Lower leg skin (tissue), 4 donors: ENCODE measurements at regions of chr4 and their contacts with region 1.

Region 1: GRCh38 chr4:98995183-98996055 is at the start of gene METAP1:
- DNase-seq: peak; percentile 92 to 98
- H3K4me3 ChIP-seq: peak within 1 kb of the TSS; percentile 98
- CTCF ChIP-seq: peak in 1 of 3 donors; percentile 19
- POLR2A ChIP-seq: peak in 1 of 2 donors; percentile 5
- total RNA-seq, gene METAP1: 35.0 to 58.4 (median 39.8) TPM

Region 2: DNA sequence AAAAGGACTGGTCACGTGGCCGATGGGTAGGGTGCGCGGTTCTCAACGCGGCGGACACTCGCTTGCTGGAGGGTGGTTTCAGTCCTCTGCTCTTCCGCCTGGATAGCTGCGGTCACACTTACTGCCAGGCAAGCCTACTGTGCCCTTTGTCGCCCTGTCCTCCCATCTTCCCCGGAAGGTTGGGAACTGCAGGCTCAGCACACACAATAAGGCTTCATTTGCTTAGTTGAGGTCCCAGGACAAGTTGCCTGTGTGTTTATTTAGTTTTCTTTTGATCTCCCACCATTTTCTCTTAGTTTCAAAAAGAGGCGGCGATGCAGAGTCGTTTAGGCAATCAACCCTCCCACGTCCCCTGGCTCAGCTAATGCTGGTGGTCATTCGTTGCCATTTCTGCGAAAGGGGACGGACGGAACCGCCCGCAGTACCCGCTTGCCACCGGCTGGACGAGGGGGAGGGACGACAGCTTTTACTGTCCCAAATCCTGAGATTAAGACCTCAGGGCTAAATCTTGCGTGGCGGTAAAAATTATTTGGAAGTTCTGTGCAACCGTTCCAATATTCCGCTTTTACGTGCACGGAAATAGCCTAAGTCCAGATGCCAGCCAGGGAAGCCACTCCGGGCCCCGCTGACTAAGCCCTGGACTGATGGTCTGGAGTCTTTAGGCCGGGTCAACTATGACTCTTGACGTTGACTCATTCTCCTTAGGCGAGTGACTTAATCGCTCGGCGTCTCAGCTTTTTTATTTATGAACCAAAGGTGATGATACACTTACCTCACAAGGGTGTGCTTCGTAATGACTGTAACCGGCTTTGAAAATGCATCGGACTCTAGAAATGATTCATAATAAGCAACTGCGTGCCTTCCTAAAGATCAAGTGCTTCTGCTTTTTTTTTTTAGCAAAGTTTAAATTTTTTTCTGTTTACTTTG is 65.8 kb before region 1 on chr4:
- intact Hi-C with region 1: loop called (anchors 10 kb)
- DNase-seq: peak; percentile 72 to 94
- H3K4me3 ChIP-seq: peak overlapping the region; percentile 58
- CTCF ChIP-seq: no peak
- POLR2A ChIP-seq: no peak

Region 3: DNA sequence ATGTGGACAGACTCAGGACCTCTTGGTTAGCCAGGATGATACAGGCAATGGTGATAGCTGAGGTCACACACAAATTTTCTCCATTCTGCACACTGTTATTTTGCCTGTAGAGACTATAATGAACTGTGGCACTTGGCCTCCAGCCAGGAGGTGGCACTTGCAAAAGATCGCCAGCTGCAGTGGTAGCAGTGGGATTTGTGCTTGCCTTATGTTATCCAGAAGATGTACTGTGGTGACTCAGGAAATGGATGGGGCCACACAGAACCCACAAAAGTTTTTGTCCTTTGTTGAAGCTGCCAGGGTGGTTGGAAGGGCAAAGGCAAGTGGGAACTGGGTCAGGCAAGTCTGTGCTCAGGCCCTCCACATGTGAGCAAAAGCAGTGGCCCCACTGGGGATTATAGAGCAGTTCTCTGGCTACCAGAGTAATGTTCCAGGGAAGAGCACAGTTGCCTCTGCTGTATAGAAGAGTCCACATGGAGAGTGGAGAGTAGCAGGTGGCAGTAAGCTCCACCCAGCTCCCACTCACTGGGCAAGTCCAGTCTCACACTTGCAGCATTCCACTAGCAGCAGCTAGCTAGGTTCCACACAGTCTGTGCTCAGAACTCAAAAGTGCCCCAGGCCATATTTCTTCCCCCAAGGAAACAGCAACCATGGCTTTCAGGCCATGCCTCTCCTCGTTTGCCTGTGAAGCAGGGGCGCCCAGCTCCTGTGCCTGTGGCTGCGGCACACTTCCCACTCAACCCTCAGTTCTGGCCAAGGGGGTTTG is 509.6 kb after region 1 on chr4:
- intact Hi-C with region 1: no loop called
- DNase-seq: no peak
- H3K4me3 ChIP-seq: no peak overlapping the region
- CTCF ChIP-seq: no peak
- POLR2A ChIP-seq: no peak